ENCODE measurements at regions of chr2 and their contacts with region 1.

Region 1: GRCh38 chr2:173075781-173076580 is at the start of gene MAP3K20:
- DNase-seq: peak in 30 of 35 experiments; percentile 1 to 70 (median 22)
- ATAC-seq: peak; percentile 73 to 90 (median 80)
- H3K4me3 ChIP-seq: peak within 1 kb of the TSS; percentile 48 to 82
- H3K4me3 Mint-ChIP-seq: peak within 1 kb of the TSS; percentile 74 to 75 (median 74)
- H3K27ac ChIP-seq: no peak within 1 kb of the TSS
- H3K27ac Mint-ChIP-seq: peak within 1 kb of the TSS in 1 of 2 donors; percentile 6
- H3K4me1 ChIP-seq: peaks cover 0 to 10% of the 10 kb centered on the region in 2 experiments
- H3K4me1 Mint-ChIP-seq: peaks cover 6 to 17% (median 8%) of the 10 kb centered on the region in 3 donors
- H3K27me3 ChIP-seq: peaks cover 0 to 5% of the 10 kb centered on the region in 2 experiments
- H3K27me3 Mint-ChIP-seq: peaks cover 29 to 31% of the 10 kb centered on the region in 2 donors
- total RNA-seq, gene MAP3K20: 1.1 to 3.0 (median 1.4) TPM

Region 2: DNA sequence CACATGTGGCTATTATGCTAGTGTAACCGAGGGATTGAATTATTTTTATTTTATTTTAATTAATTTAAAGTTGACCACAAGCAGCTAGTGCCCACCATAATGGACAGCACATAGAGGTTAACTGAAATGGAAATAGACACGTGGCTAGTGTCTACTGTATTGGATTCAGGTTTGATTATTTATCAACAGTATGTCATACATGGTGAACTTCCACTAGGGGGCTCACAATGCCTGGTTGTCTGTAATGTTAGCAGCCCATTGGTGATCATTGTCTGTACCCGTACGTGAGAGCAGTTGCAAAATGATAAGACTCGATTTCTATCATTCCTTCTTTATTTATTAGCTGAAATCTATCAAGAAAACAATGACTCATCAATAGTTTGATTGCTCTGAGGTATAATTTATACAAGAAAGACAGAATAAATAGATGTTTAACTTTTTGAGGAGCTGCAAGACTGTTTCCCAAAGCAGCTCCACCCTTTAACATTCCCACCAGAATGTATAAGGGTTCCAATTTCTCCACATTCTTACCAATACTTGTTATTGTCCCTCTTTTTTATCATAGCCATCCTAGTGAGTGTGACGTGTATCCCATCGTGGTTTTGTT is 1477.2 kb before region 1 on chr2:
- CTCF ChIA-PET with region 1: interaction called in 1 of 2 experiments, 18 read pairs
- POLR2A ChIA-PET with region 1: no interaction called
- DNase-seq: peak in 30 of 35 experiments; percentile 3 to 74 (median 29)
- ATAC-seq: peak; percentile 85 to 97 (median 94)
- H3K4me3 ChIP-seq: no peak overlapping the region
- H3K4me3 Mint-ChIP-seq: no peak overlapping the region
- H3K27ac ChIP-seq: no peak overlapping the region
- H3K27ac Mint-ChIP-seq: no peak overlapping the region
- H3K4me1 ChIP-seq: no peaks in the 10 kb centered on the region
- H3K4me1 Mint-ChIP-seq: peaks cover 1 to 5% (median 4%) of the 10 kb centered on the region in 3 donors
- H3K27me3 ChIP-seq: peaks cover 2 to 3% of the 10 kb centered on the region in 2 experiments
- H3K27me3 Mint-ChIP-seq: peaks cover 2 to 7% of the 10 kb centered on the region in 2 donors

Region 3: GRCh38 chr2:173037245-173038120 is 38.5 kb before region 1 on chr2:
- CTCF ChIA-PET with region 1: no interaction called
- POLR2A ChIA-PET with region 1: no interaction called
- DNase-seq: no peak
- ATAC-seq: no peak
- H3K4me3 ChIP-seq: no peak overlapping the region
- H3K4me3 Mint-ChIP-seq: no peak overlapping the region
- H3K27ac ChIP-seq: no peak overlapping the region
- H3K27ac Mint-ChIP-seq: no peak overlapping the region
- H3K4me1 ChIP-seq: no peaks in the 10 kb centered on the region
- H3K4me1 Mint-ChIP-seq: no peaks in the 10 kb centered on the region
- H3K27me3 ChIP-seq: no peaks in the 10 kb centered on the region
- H3K27me3 Mint-ChIP-seq: no peaks in the 10 kb centered on the region

Region 4: GRCh38 chr2:174223388-174223787 is 1147.4 kb after region 1 on chr2:
- CTCF ChIA-PET with region 1: interaction called in 1 of 2 experiments, 11 read pairs
- POLR2A ChIA-PET with region 1: no interaction called
- DNase-seq: no peak
- ATAC-seq: no peak
- H3K4me3 ChIP-seq: no peak overlapping the region
- H3K4me3 Mint-ChIP-seq: no peak overlapping the region
- H3K27ac ChIP-seq: no peak overlapping the region
- H3K27ac Mint-ChIP-seq: no peak overlapping the region
- H3K4me1 ChIP-seq: no peaks in the 10 kb centered on the region
- H3K4me1 Mint-ChIP-seq: peaks cover 2 to 6% (median 5%) of the 10 kb centered on the region in 3 donors
- H3K27me3 ChIP-seq: no peaks in the 10 kb centered on the region
- H3K27me3 Mint-ChIP-seq: no peaks in the 10 kb centered on the region